Heart left ventricle (tissue), 16 donors: ENCODE measurements at regions of chr22 and their contacts with region 1.

Region 1: GRCh38 chr22:28741758-28742561 is at the starts of genes CHEK2 and HSCB:
- DNase-seq: peak; percentile 98 to 99 (median 99)
- ATAC-seq: peak; percentile 98 to 99 (median 99)
- H3K4me3 ChIP-seq: peak within 1 kb of the TSS; percentile 67 to 99 (median 83)
- H3K27ac ChIP-seq: peak within 1 kb of the TSS; percentile 95 to 100 (median 99)
- H3K4me1 ChIP-seq: peaks cover 0 to 17% (median 10%) of the 10 kb centered on the region in 12 donors
- H3K27me3 ChIP-seq: no peaks in the 10 kb centered on the region
- CTCF ChIP-seq: peak in 4 of 12 donors; percentile 15 to 20 (median 16)
- POLR2A ChIP-seq: peak in 1 of 2 donors; percentile 65
- total RNA-seq, gene CHEK2: 1.1 to 7.8 (median 1.6) TPM
- total RNA-seq, gene HSCB: 7.4 to 18.3 (median 10.9) TPM

Region 2: GRCh38 chr22:28772633-28773460 is 30.9 kb after region 1 on chr22 and contains the start of gene CCDC117:
- intact Hi-C with region 1: loop called in 5 of 10 experiments (anchors 1 to 2 kb)
- DNase-seq: peak; percentile 96 to 98 (median 97)
- ATAC-seq: peak; percentile 98 to 99 (median 99)
- H3K4me3 ChIP-seq: peak within 1 kb of the TSS; percentile 65 to 93 (median 80)
- H3K27ac ChIP-seq: peak within 1 kb of the TSS; percentile 86 to 100 (median 97)
- H3K4me1 ChIP-seq: peaks cover 0 to 26% (median 19%) of the 10 kb centered on the region in 12 donors
- H3K27me3 ChIP-seq: no peaks in the 10 kb centered on the region
- CTCF ChIP-seq: peak in 6 of 12 donors; percentile 3 to 41 (median 24)
- POLR2A ChIP-seq: peak; percentile 23 to 88
- total RNA-seq, gene CCDC117: 8.9 to 16.6 (median 13.3) TPM